ENCODE measurements at regions of chr2 and their contacts with region 1.

Region 1: GRCh38 chr2:70498054-70498453 is 55.6 kb downstream of the TGFA start:
- DNase-seq: peak; percentile 82
- ATAC-seq: peak; percentile 90
- H3K4me3 ChIP-seq: no peak overlapping the region
- H3K27ac ChIP-seq: no peak overlapping the region
- H3K4me1 ChIP-seq: peaks cover 31% of the 10 kb centered on the region
- H3K27me3 ChIP-seq: no peaks in the 10 kb centered on the region
- CTCF ChIP-seq: peak; percentile 64

Region 2: GRCh38 chr2:70471129-70471528 is 26.9 kb before region 1 on chr2:
- CTCF ChIA-PET with region 1: interaction called, 10 read pairs
- POLR2A ChIA-PET with region 1: no interaction called
- intact Hi-C with region 1: no loop called
- DNase-seq: peak; percentile 16
- ATAC-seq: peak; percentile 22; the same call in 1 of the 2 replicates
- H3K4me3 ChIP-seq: no peak overlapping the region
- H3K27ac ChIP-seq: no peak overlapping the region
- H3K4me1 ChIP-seq: peaks cover 9% of the 10 kb centered on the region
- H3K27me3 ChIP-seq: no peaks in the 10 kb centered on the region
- CTCF ChIP-seq: no peak

Region 3: DNA sequence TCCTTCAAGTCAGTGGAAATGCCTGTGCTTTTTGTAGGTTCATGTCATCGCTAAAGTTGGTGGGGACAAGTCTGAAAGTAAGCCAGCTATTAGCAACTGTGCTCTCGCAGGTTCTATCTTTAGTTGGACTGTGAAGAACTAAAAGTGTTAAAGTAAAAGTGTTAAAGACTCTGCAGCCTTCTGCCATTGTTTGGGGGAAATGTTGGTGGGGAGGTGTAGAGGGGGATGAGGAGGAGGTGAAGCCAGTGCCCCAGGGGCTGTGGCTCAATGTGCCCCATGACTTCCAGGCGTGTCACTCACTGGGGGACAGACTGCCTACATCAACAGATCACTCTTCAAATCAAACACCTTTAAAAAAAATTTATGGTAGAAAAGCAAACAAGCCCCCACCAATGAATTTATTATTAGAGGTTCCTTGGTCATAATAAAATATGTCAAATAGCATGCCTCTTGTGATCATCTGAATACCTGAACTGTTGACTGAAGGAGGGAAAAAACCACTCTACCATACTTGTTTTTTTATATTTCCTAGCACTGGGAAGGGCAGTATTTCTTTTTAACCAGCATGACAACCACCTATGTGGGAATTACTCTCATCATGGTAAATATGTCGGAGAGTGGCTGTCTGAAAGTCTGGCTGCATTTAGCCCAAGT is 36.3 kb after region 1 on chr2:
- CTCF ChIA-PET with region 1: no interaction called
- POLR2A ChIA-PET with region 1: no interaction called
- intact Hi-C with region 1: loop called (anchors 2 kb)
- DNase-seq: peak; percentile 68
- ATAC-seq: peak; percentile 80
- H3K4me3 ChIP-seq: 0 out of 2 replicates have a peak overlapping the region, but pooled peaks have one; percentile 2
- H3K27ac ChIP-seq: peak overlapping the region; percentile 71
- H3K4me1 ChIP-seq: peaks cover 61% of the 10 kb centered on the region
- H3K27me3 ChIP-seq: no peaks in the 10 kb centered on the region
- CTCF ChIP-seq: no peak

Region 4: GRCh38 chr2:70616168-70616694 is 118.2 kb after region 1 on chr2:
- CTCF ChIA-PET with region 1: interaction called, 5 read pairs
- POLR2A ChIA-PET with region 1: no interaction called
- intact Hi-C with region 1: loop called (anchors 5 kb)
- DNase-seq: peak; percentile 86
- ATAC-seq: peak; percentile 70
- H3K4me3 ChIP-seq: no peak overlapping the region
- H3K27ac ChIP-seq: 0 out of 2 replicates have a peak overlapping the region, but pooled peaks have one; percentile 4
- H3K4me1 ChIP-seq: peaks cover 20% of the 10 kb centered on the region
- H3K27me3 ChIP-seq: no peaks in the 10 kb centered on the region
- CTCF ChIP-seq: no peak

Measured in PC-3 (cell line).